ENCODE measurements at regions of chr1 and their contacts with region 1.

Region 1: GRCh38 chr1:159798893-159799292 is 3.3 kb upstream of the FCRL6 start:
- DNase-seq: peak; percentile 95
- H3K4me3 Mint-ChIP-seq: no peak overlapping the region
- H3K27ac Mint-ChIP-seq: no peak overlapping the region
- H3K4me1 Mint-ChIP-seq: no peaks in the 10 kb centered on the region
- H3K27me3 Mint-ChIP-seq: no peaks in the 10 kb centered on the region
- CTCF ChIP-seq: peak; percentile 83

Region 2: GRCh38 chr1:159197561-159198557 is 601.0 kb before region 1 on chr1:
- CTCF ChIA-PET with region 1: interaction called, 12 read pairs
- POLR2A ChIA-PET with region 1: no interaction called
- intact Hi-C with region 1: no loop called
- DNase-seq: peak; percentile 88
- H3K4me3 Mint-ChIP-seq: no peak overlapping the region
- H3K27ac Mint-ChIP-seq: no peak overlapping the region
- H3K4me1 Mint-ChIP-seq: peaks cover 32% of the 10 kb centered on the region
- H3K27me3 Mint-ChIP-seq: no peaks in the 10 kb centered on the region
- CTCF ChIP-seq: peak; percentile 95

Region 3: GRCh38 chr1:159829273-159829634 is 30.4 kb after region 1 on chr1:
- CTCF ChIA-PET with region 1: interaction called, 23 read pairs
- POLR2A ChIA-PET with region 1: no interaction called
- intact Hi-C with region 1: no loop called
- DNase-seq: peak; percentile 36
- H3K4me3 Mint-ChIP-seq: no peak overlapping the region
- H3K27ac Mint-ChIP-seq: no peak overlapping the region
- H3K4me1 Mint-ChIP-seq: peaks cover 5% of the 10 kb centered on the region
- H3K27me3 Mint-ChIP-seq: no peaks in the 10 kb centered on the region
- CTCF ChIP-seq: no peak

Region 4: GRCh38 chr1:159860426-159860825 is 61.5 kb after region 1 on chr1:
- CTCF ChIA-PET with region 1: interaction called, 19 read pairs
- POLR2A ChIA-PET with region 1: no interaction called
- intact Hi-C with region 1: no loop called
- DNase-seq: no peak
- H3K4me3 Mint-ChIP-seq: no peak overlapping the region
- H3K27ac Mint-ChIP-seq: no peak overlapping the region
- H3K4me1 Mint-ChIP-seq: peaks cover 7% of the 10 kb centered on the region
- H3K27me3 Mint-ChIP-seq: no peaks in the 10 kb centered on the region
- CTCF ChIP-seq: no peak

Region 5: GRCh38 chr1:159900086-159900680 is 101.3 kb after region 1 on chr1 and contains the start of gene CFAP45:
- CTCF ChIA-PET with region 1: interaction called, 1,396 read pairs
- POLR2A ChIA-PET with region 1: interaction called, 3 read pairs
- intact Hi-C with region 1: no loop called
- DNase-seq: peak; percentile 79
- H3K4me3 Mint-ChIP-seq: peak within 1 kb of the TSS; percentile 60
- H3K27ac Mint-ChIP-seq: no peak within 1 kb of the TSS
- H3K4me1 Mint-ChIP-seq: peaks cover 10% of the 10 kb centered on the region
- H3K27me3 Mint-ChIP-seq: no peaks in the 10 kb centered on the region
- CTCF ChIP-seq: no peak
- total RNA-seq, gene CFAP45: 0.32 and 0.40 TPM in 2 replicates

Region 6: DNA sequence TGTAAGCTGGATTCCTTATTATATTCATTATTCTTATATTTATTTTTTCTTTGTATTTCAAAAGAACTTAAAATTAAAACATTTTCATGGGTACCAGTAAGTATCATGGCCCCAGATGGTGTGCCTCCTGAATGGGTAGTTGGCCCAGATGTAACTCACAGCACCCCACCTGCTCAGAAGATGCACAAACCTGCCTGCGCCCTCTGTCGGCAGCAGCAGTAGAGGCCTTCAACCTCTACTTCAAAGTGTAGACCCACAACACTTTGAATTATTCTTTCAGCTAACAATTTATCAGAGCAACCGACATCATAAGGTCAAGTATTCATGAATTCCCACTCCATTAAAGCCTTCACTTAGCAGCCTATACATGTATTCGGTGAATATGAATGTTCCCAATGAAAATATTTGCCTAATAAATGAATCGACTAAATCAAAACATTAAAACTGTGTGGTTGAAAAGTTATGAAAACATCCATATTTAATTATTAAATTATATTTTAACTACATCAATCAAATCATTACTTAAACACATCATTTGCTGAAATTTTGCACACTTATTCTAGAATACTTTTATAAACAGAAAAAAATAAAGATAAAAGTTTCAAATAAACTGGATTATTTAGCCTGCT is 207.5 kb after region 1 on chr1:
- CTCF ChIA-PET with region 1: interaction called, 123 read pairs
- POLR2A ChIA-PET with region 1: no interaction called
- intact Hi-C with region 1: loop called (anchors 1 kb)
- DNase-seq: peak; percentile 87
- H3K4me3 Mint-ChIP-seq: no peak overlapping the region
- H3K27ac Mint-ChIP-seq: no peak overlapping the region
- H3K4me1 Mint-ChIP-seq: peaks cover 11% of the 10 kb centered on the region
- H3K27me3 Mint-ChIP-seq: no peaks in the 10 kb centered on the region
- CTCF ChIP-seq: peak; percentile 99